Adrenal gland (tissue), 19 donors: ENCODE measurements at regions of chr2 and their contacts with region 1.

Region 1: GRCh38 chr2:233711312-233712008 is 1.2 kb upstream of the UGT1A5 start:
- DNase-seq: peak; percentile 83 to 91 (median 90)
- H3K4me3 ChIP-seq: no peak overlapping the region
- H3K27ac ChIP-seq: no peak overlapping the region
- H3K4me1 ChIP-seq: no peaks in the 10 kb centered on the region
- H3K27me3 ChIP-seq: peaks cover 25% of the 10 kb centered on the region
- CTCF ChIP-seq: peak; percentile 82 to 95 (median 84)
- POLR2A ChIP-seq: no peak

Region 2: GRCh38 chr2:233566141-233566960 is 145.1 kb before region 1 on chr2 and contains the start of gene USP40:
- intact Hi-C with region 1: loop called in 1 of 2 experiments (anchors 10 kb)
- DNase-seq: peak; percentile 84 to 94 (median 92)
- H3K4me3 ChIP-seq: peak within 1 kb of the TSS; percentile 81 to 98 (median 96)
- H3K27ac ChIP-seq: peak within 1 kb of the TSS; percentile 85 to 94 (median 91)
- H3K4me1 ChIP-seq: peaks cover 9 to 20% of the 10 kb centered on the region in 2 donors
- H3K27me3 ChIP-seq: no peaks in the 10 kb centered on the region
- CTCF ChIP-seq: no peak
- POLR2A ChIP-seq: peak; percentile 80 to 85
- total RNA-seq, gene USP40: 29.9 to 64.7 (median 44.1) TPM